ENCODE measurements at regions of chr7 and their contacts with region 1.

Region 1: GRCh38 chr7:40134428-40135316 is at the starts of genes MPLKIP and SUGCT:
- DNase-seq: peak; percentile 89 to 92 (median 90)
- ATAC-seq: peak; percentile 92
- H3K4me3 ChIP-seq: peak within 1 kb of the TSS; percentile 95
- H3K27ac ChIP-seq: peak within 1 kb of the TSS; percentile 98
- H3K4me1 ChIP-seq: peaks cover 0 to 6% of the 10 kb centered on the region in 2 experiments; a peak in 2 of 5 replicates
- H3K27me3 ChIP-seq: no peaks in the 10 kb centered on the region
- CTCF ChIP-seq: peak; percentile 87 to 94 (median 88)
- EP300 ChIP-seq: peak; percentile 19; the same call in 1 of the 2 replicates
- POLR2A ChIP-seq: peak; percentile 90
- RAD21 ChIP-seq: peak; percentile 31 to 44; a peak in 3 of 4 replicates
- polyA plus RNA-seq, gene MPLKIP: 5.6 to 12.3 TPM
- polyA plus RNA-seq, gene SUGCT: 0.58 to 1.3 TPM

Region 2: DNA sequence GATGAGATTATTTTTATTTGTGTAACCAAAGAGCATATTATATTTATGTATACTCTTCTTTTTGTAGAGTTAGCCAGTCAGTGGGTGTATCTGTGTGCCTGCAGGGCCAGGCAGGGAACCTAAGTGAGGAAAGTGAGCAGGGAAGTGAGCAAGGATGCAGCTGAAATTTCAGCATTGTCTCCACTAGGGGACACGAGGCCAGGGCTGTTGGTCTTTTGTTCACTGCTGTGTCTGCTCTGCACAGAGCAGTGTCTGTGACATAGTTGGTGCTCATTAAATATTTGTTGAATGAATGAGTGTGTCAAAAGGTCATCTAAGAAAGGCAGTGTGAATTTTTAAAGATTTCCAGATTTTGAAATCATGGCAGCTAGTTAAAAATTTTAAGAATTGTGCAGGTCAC is 51.9 kb after region 1 on chr7:
- CTCF ChIA-PET with region 1: no interaction called
- POLR2A ChIA-PET with region 1: no interaction called
- in situ Hi-C with region 1: no loop called
- intact Hi-C with region 1: loop called (anchors 1 kb)
- DNase-seq: peak in 1 of 4 experiments; percentile 5
- ATAC-seq: peak; percentile 71; the same call in 2 of the 3 replicates
- H3K4me3 ChIP-seq: no peak overlapping the region
- H3K27ac ChIP-seq: no peak overlapping the region
- H3K4me1 ChIP-seq: no peaks in the 10 kb centered on the region
- H3K27me3 ChIP-seq: peaks cover 0 to 5% of the 10 kb centered on the region in 2 experiments; a peak in 3 of 5 replicates
- CTCF ChIP-seq: no peak
- EP300 ChIP-seq: no peak
- POLR2A ChIP-seq: no peak
- RAD21 ChIP-seq: no peak